Panc1 (cell line): ENCODE measurements at regions of chr12 and their contacts with region 1.

Region 1: GRCh38 chr12:106625989-106626388 is 43.2 kb downstream of the RFX4 start:
- DNase-seq: no peak
- ATAC-seq: no peak
- H3K4me3 ChIP-seq: no peak overlapping the region
- H3K27ac ChIP-seq: no peak overlapping the region
- H3K4me1 ChIP-seq: no peaks in the 10 kb centered on the region
- H3K27me3 ChIP-seq: no peaks in the 10 kb centered on the region
- CTCF ChIP-seq: no peak

Region 2: GRCh38 chr12:106645074-106645421 is 19.1 kb after region 1 on chr12:
- CTCF ChIA-PET with region 1: interaction called, 11 read pairs
- POLR2A ChIA-PET with region 1: no interaction called
- in situ Hi-C with region 1: no loop called
- intact Hi-C with region 1: no loop called
- DNase-seq: no peak
- ATAC-seq: no peak
- H3K4me3 ChIP-seq: no peak overlapping the region
- H3K27ac ChIP-seq: no peak overlapping the region
- H3K4me1 ChIP-seq: no peaks in the 10 kb centered on the region
- H3K27me3 ChIP-seq: no peaks in the 10 kb centered on the region
- CTCF ChIP-seq: no peak

Region 3: DNA sequence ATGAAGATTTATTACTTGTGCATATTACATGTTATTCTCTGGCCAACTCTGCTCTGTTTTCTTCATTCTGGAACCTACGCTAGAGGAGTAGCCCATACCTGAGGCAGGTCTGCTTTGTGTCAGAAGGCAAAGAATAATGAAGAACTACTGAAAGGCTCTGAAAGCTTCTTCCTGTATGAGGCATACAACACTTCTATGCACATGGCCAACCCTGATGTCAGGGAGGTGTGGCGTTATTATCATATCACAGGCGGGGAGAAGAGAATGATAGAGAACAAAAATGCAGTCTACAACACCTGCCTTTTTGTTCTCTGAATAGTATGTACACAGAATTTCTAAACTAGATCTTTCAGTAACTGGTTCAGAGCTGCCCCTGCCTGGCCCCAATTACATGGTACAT is 499.8 kb after region 1 on chr12:
- CTCF ChIA-PET with region 1: no interaction called
- POLR2A ChIA-PET with region 1: no interaction called
- in situ Hi-C with region 1: no loop called
- intact Hi-C with region 1: no loop called
- DNase-seq: no peak
- ATAC-seq: no peak
- H3K4me3 ChIP-seq: no peak overlapping the region
- H3K27ac ChIP-seq: no peak overlapping the region
- H3K4me1 ChIP-seq: no peaks in the 10 kb centered on the region
- H3K27me3 ChIP-seq: peaks cover 15% of the 10 kb centered on the region
- CTCF ChIP-seq: no peak